Activated CD8-positive, alpha-beta T cell treated with anti-CD3 and anti-CD28 coated beads for 36 hours (primary cell): ENCODE measurements at regions of chr14 and their contacts with region 1.

Region 1: DNA sequence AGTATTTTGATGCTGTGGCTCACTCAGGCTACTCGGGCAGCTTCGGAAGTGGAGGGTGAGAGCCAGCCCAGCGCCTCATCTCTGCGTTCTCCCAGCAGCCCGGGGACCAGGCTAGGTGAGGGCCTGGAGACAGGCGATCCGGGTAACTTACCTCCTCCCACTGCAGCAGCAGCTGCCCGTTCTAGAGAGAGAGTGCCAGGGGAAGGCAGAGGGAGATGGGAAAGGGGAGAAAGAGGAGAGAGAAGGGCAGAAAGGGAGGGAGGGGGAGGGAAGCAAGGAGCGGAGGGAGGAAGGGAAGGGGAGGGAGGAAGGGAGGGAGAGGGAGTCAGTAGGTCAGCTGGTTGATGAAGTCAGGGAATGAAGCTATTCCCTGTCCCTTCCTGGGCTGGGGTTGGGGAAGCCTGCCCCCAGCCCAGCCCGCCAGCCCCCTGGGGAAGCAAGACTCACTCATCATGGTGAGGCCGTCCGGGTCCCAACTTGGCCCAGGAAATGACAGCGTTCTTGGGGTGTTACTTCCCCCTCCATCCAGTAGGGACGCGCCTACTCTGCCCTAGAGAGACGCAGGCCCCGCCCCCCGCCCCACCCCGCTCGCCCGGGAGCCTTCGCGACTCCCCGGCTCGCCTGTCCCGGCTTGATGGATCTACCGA is at the start of gene IFI27L2:
- DNase-seq: peak; percentile 84
- ATAC-seq: peak; percentile 99
- H3K4me3 Mint-ChIP-seq: peak within 1 kb of the TSS; percentile 76
- H3K27ac Mint-ChIP-seq: peak within 1 kb of the TSS; percentile 66
- H3K4me1 Mint-ChIP-seq: peaks cover 15% of the 10 kb centered on the region
- H3K27me3 Mint-ChIP-seq: peaks cover 3% of the 10 kb centered on the region
- CTCF ChIP-seq: peak; percentile 44
- total RNA-seq, gene IFI27L2: 43.0 to 44.5 TPM

Region 2: DNA sequence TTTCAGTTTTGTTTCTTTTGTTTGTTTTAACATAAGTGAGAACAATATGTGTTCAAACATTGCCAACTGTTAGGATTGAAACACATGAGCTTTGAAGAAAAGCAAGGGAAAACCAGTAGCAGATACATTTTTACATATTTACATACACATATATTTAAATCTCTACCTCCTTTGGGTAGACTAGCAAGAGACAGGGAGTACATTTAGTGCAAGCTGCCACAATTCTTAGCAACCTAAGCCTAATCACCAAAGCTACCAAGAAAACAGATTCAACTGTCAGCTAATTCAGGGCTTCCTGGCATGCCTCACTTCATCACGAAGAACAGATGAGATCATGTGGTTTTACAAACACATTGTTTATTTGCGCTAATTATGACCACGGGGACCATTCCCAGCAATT is 484.0 kb before region 1 on chr14:
- CTCF ChIA-PET with region 1: no interaction called
- POLR2A ChIA-PET with region 1: no interaction called
- intact Hi-C with region 1: no loop called
- DNase-seq: no peak
- ATAC-seq: no peak
- H3K4me3 Mint-ChIP-seq: no peak overlapping the region
- H3K27ac Mint-ChIP-seq: no peak overlapping the region
- H3K4me1 Mint-ChIP-seq: peaks cover 16% of the 10 kb centered on the region
- H3K27me3 Mint-ChIP-seq: peaks cover 15% of the 10 kb centered on the region
- CTCF ChIP-seq: no peak

Region 3: DNA sequence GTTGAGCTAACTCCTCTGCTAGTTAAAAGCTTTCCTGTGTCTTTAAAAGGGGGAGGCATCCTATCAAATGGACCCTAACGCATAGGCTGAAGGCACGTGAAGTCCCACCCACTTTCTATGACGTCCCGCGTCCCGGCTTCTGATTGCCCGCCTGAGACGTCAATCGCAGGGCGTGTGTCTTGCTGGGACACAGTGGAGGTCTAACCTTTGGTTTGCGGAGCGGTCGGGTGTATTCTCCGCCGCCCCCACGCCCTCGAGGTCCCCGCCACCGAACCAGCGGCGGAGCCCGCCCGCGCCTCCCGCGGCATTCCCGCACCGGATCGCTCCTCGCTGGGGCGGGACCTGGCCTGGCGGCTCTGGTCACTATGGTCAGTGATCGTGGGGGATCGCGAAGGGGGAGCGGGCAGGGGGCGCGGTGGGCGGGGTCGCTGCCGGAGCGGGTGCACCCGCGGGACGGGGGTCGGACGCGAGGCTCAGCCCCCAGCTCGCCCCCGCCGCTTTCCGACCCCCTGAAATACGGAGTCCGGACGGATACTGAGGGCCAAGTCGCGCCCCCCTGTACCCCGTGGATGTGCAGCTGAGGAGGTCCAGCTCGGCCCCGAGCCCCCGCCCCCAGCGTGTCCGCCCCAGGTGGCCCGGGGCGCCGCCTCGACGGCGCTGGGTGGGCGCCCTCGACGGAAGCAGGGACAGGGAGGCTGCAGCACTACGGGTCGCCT is 102.9 kb before region 1 on chr14 and contains the start of gene OTUB2:
- CTCF ChIA-PET with region 1: interaction called, 10 read pairs
- POLR2A ChIA-PET with region 1: no interaction called
- intact Hi-C with region 1: no loop called
- DNase-seq: peak; percentile 98
- ATAC-seq: peak; percentile 96
- H3K4me3 Mint-ChIP-seq: peak within 1 kb of the TSS; percentile 42
- H3K27ac Mint-ChIP-seq: no peak within 1 kb of the TSS
- H3K4me1 Mint-ChIP-seq: peaks cover 40% of the 10 kb centered on the region
- H3K27me3 Mint-ChIP-seq: peaks cover 1% of the 10 kb centered on the region
- CTCF ChIP-seq: no peak
- total RNA-seq, gene OTUB2: 0.25 to 0.29 TPM

Region 4: DNA sequence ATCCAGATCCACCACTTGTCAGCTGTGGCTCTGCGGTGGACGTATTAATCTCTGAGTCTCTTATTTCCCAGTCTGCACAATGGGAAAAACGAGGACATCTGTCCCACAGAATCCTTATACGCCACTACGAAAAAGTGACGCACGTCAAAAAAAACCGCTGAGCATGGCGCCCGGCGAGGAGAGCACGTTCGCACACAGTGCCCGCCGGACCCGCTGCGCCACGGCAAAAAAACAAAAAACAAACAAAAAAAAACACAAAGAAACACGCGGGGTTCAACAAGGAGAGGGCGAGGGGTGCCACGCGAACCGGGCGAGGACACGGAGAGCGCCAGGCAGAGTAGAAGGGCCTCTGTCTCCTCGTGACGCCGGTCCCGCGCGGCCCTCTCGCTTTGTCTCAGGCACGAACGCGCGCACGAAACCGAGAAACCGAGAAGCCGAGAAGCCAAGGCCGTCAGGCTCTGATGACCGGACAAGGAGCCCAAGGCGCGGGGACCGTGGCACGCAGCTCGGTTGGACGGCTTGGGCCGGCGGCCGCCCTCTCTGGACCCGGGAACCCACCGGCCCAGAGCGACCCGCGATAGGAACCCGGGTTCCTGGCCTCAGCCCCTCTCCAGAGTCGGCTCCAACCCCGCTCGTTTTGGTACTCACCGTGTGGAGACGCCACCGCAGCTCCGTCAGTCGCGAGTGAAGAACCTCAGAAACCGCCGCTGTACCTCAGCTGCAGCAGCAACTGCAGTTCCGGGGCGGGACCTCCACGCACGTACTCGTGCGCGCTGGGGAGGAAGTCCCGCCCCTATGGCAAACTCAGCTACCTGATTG is 48.6 kb before region 1 on chr14 and contains the start of gene DDX24:
- CTCF ChIA-PET with region 1: interaction called, 20 read pairs
- POLR2A ChIA-PET with region 1: interaction called, 10 read pairs
- intact Hi-C with region 1: no loop called
- DNase-seq: peak; percentile 98
- ATAC-seq: peak; percentile 98
- H3K4me3 Mint-ChIP-seq: peak within 1 kb of the TSS; percentile 98
- H3K27ac Mint-ChIP-seq: peak within 1 kb of the TSS; percentile 99
- H3K4me1 Mint-ChIP-seq: peaks cover 44% of the 10 kb centered on the region
- H3K27me3 Mint-ChIP-seq: no peaks in the 10 kb centered on the region
- CTCF ChIP-seq: no peak
- total RNA-seq, gene DDX24: 272 to 275 TPM

Region 5: GRCh38 chr14:94173885-94174603 is 44.8 kb after region 1 on chr14 and contains the start of gene PPP4R4:
- CTCF ChIA-PET with region 1: interaction called, 65 read pairs
- POLR2A ChIA-PET with region 1: interaction called, 4 read pairs
- intact Hi-C with region 1: no loop called
- DNase-seq: peak; percentile 89
- ATAC-seq: peak; percentile 96
- H3K4me3 Mint-ChIP-seq: peak within 1 kb of the TSS; percentile 71
- H3K27ac Mint-ChIP-seq: no peak within 1 kb of the TSS
- H3K4me1 Mint-ChIP-seq: peaks cover 18% of the 10 kb centered on the region
- H3K27me3 Mint-ChIP-seq: peaks cover 31% of the 10 kb centered on the region
- CTCF ChIP-seq: no peak
- total RNA-seq, gene PPP4R4: 0.63 to 1.2 TPM

Region 6: GRCh38 chr14:94485944-94486841 is 357.0 kb after region 1 on chr14:
- CTCF ChIA-PET with region 1: interaction called, 5 read pairs
- POLR2A ChIA-PET with region 1: no interaction called
- intact Hi-C with region 1: loop called (anchors 5 kb)
- DNase-seq: peak; percentile 38
- ATAC-seq: peak; percentile 56
- H3K4me3 Mint-ChIP-seq: no peak overlapping the region
- H3K27ac Mint-ChIP-seq: no peak overlapping the region
- H3K4me1 Mint-ChIP-seq: no peaks in the 10 kb centered on the region
- H3K27me3 Mint-ChIP-seq: peaks cover 14% of the 10 kb centered on the region
- CTCF ChIP-seq: peak; percentile 99